ENCODE measurements at regions of chr19 and their contacts with region 1.

Region 1: GRCh38 chr19:2151339-2152229 is at the start of gene AP3D1:
- DNase-seq: peak; percentile 98 to 100 (median 100)

Region 2: DNA sequence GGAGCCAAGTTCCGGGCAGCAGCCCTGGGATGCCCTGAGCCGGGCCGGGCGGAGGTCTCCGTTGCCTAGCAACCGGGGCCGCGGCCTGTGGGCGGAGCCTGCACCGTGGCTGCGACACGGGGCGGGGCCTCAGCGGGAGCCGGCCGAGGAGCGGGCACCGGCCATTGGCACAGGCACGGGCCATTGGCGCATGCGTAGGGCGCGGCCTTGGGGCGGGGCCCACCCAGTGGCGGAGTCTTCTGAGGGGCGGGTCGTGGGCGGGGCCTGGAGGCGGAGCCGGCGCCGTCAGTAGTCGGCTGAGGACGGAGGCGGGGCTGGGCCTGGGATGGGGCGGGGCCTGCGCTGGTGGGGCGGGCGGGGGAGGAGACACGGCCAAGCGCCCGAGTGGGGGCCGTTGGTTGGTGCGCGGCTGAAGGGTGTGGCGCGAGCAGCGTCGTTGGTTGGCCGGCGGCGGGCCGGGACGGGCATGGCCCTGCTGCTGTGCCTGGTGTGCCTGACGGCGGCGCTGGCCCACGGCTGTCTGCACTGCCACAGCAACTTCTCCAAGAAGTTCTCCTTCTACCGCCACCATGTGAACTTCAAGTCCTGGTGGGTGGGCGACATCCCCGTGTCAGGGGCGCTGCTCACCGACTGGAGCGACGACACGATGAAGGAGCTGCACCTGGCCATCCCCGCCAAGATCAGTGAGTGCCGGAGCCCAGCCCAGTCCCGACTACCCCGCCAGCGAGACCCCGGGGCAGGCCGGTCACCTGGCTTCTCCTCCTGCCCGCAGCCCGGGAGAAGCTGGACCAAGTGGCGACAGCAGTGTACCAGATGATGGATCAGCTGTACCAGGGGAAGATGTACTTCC is 54.9 kb before region 1 on chr19 and contains the start of gene IZUMO4:
- intact Hi-C with region 1: loop called (anchors 5 kb)
- DNase-seq: peak; percentile 98 to 100 (median 100)

Region 3: GRCh38 chr19:2108251-2109016 is 43.1 kb before region 1 on chr19:
- intact Hi-C with region 1: no loop called
- DNase-seq: no peak

Region 4: GRCh38 chr19:2199215-2199614 is 47.6 kb after region 1 on chr19:
- intact Hi-C with region 1: no loop called
- DNase-seq: peak in 1 of 10 donors; percentile 85

Region 5: GRCh38 chr19:2236314-2237050 is 84.9 kb after region 1 on chr19 and contains the starts of genes PLEKHJ1 and SF3A2:
- intact Hi-C with region 1: loop called (anchors 5 kb)
- DNase-seq: peak; percentile 92 to 99 (median 94)

Region 6: DNA sequence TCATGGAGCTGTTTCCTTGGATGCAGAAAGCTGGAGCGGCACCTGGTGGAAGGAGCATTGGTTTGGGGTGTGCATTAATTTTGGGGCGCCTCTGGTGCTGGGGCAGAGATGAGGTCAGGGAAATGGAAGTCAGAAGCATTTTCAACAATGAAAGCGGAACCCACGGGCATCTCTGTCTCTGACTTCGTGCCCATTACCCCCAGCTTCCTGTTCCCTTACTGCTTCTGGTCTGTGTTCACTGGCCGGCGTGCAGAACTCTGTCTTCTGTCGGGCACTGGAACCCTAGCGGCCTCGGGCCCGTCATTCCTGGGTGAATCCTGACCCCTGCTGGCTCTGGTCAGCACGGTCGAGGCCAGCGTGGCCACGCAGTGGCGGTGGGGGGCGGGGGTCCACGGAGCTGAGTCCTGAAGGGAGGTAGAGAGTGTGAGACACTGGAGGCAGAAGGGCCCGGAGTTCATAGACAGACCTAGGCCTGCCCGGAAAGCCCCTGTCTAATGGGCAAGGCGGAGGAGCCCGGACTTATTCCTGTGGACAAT is 164.3 kb after region 1 on chr19:
- intact Hi-C with region 1: loop called (anchors 1 kb)
- DNase-seq: peak in 9 of 10 donors; percentile 54 to 95 (median 74)

Measured in posterior cingulate gyrus (tissue), 11 donors.